Activated naive CD4-positive, alpha-beta T cell treated with anti-CD3 and anti-CD28 coated beads, Interleukin-2, amount 10 ng/mL, durations not matched to agents 7 days and 5 days (primary cell): ENCODE measurements at regions of chr2 and their contacts with region 1.

Region 1: GRCh38 chr2:112941753-112942658 is 31.0 kb downstream of the IL37 start:
- DNase-seq: peak; percentile 84
- H3K4me3 Mint-ChIP-seq: no peak overlapping the region
- H3K27ac Mint-ChIP-seq: no peak overlapping the region
- H3K4me1 Mint-ChIP-seq: no peaks in the 10 kb centered on the region
- H3K27me3 Mint-ChIP-seq: peaks cover 23% of the 10 kb centered on the region

Region 2: DNA sequence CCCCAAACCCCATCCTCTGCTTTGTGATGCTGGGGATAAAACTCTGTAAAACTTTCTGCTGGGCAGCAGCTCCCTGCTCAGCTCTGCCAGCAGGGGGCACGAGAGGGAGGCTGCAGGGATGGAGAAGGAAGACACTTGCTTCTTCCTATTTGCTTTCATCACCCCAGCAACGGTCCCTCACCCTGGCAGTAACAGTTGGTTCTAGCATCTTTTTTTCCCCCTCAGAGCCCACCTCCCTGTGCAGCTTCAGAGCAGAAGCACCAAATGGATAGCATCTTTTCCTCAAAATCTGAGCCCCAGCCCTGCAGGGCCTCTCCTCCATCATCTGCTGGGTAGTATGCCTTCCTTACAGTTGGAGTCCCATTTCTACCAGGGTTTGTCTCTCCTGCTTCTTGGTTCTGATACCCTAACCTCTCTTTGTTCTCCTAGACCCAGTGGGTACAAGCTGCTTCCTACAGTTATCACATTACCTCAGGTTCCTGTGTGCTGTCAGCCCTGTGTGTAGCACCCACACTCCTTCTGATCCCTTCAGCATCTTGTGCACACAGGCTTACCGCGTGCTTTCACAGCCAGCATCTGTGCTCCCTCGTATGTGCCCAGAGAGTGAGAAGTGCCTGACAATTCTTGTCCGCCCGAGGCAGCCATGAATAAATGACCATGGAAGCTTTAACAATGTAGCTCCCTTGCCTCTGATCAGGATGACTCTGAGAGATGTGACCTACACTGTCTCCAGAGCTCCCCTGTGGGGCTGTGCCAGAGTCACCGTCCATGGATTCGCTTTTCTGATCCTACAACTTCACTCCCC is 192.0 kb before region 1 on chr2:
- CTCF ChIA-PET with region 1: interaction called, 151 read pairs
- DNase-seq: peak; percentile 90
- H3K4me3 Mint-ChIP-seq: no peak overlapping the region
- H3K27ac Mint-ChIP-seq: peak overlapping the region; percentile 43
- H3K4me1 Mint-ChIP-seq: peaks cover 52% of the 10 kb centered on the region
- H3K27me3 Mint-ChIP-seq: no peaks in the 10 kb centered on the region

Region 3: DNA sequence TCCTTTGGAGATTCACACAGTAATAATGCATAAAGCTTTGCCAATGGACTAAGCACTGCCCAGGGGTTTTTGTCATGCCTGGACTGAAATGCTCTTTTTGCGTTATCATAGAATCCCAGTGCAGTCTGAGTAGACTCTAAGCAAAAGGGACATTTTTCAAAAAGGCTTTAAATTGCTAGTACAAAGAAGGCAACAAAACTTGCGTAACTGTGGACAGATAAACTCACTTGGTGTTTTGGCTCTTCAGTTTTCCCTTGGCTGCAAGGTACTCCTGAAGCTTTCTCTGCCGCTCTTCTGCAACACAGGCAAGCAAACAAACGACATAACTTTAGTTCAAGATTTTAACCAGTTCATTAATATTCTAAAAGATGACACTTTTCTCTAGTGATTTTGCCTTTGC is 179.7 kb before region 1 on chr2:
- CTCF ChIA-PET with region 1: interaction called, 18 read pairs
- DNase-seq: no peak
- H3K4me3 Mint-ChIP-seq: peak overlapping the region; percentile 98
- H3K27ac Mint-ChIP-seq: no peak overlapping the region
- H3K4me1 Mint-ChIP-seq: peaks cover 50% of the 10 kb centered on the region
- H3K27me3 Mint-ChIP-seq: no peaks in the 10 kb centered on the region

Region 4: DNA sequence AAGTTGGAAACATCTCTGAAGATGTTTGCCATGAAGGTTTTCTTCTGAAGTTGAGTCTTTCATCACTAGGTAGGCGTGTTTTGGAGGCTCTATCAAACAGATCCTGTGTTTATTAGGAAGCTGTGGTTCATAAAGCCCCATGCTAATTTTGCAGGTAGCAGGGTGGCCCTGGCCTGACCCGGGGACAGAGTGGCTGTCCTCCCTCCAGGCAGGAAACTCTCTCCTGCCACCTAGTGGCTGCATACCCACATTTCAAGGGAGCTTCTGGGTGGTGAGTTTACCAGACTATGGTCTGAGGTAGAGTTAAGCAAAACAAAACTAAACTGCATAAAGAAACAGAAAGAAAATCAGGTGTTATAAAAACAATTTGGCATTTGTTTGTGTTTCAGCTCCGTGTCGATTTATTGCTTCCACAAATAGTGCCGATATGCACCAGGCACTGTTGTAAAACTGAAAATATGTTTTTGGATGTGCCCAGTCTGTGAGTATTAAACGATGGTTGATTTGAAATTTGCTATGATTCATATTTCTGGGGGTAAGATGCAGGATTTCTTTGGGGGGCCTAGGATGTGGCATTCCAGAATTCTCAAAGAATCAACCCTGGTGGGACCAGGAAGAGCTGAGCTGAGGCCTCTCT is 57.0 kb before region 1 on chr2:
- CTCF ChIA-PET with region 1: interaction called, 34 read pairs
- DNase-seq: peak; percentile 78
- H3K4me3 Mint-ChIP-seq: no peak overlapping the region
- H3K27ac Mint-ChIP-seq: peak overlapping the region; percentile 43
- H3K4me1 Mint-ChIP-seq: peaks cover 27% of the 10 kb centered on the region
- H3K27me3 Mint-ChIP-seq: peaks cover 10% of the 10 kb centered on the region

Region 5: GRCh38 chr2:112920923-112921532 is 21.0 kb before region 1 on chr2:
- CTCF ChIA-PET with region 1: interaction called, 50 read pairs
- DNase-seq: no peak
- H3K4me3 Mint-ChIP-seq: no peak overlapping the region
- H3K27ac Mint-ChIP-seq: no peak overlapping the region
- H3K4me1 Mint-ChIP-seq: no peaks in the 10 kb centered on the region
- H3K27me3 Mint-ChIP-seq: peaks cover 14% of the 10 kb centered on the region

Region 6: DNA sequence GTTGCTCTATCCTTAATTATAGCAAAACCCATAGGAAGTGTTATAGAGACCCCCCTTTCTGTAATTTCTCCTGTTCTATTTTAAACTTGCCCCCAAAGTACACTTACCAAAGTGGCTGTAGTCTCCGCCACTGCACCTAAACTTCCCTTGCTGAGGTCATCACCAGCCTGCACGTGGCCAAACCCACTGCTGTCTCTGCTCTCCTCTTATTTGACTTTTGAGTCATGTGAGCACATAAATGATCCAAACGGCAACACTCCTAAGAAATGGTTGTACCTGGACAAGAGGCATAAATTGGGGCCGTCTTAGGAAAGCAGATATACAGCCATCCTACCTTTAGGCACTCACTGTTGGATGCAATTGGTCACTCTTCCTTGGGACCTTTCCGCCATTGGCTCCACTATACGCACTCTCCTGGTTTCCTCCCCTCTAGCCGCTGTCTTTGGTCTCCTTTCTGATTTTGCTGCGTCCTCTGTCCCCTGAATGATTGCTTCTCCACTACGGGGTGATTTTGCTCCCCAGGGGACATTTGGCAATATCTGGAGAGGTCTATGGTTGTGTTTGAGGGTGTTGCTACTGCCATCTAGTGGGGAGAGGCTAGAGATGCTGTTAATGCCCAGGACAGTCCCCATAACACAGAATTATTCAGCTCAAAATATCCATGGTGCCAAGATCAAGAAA is 16.6 kb after region 1 on chr2:
- CTCF ChIA-PET with region 1: interaction called, 24 read pairs
- DNase-seq: peak; percentile 58
- H3K4me3 Mint-ChIP-seq: no peak overlapping the region
- H3K27ac Mint-ChIP-seq: no peak overlapping the region
- H3K4me1 Mint-ChIP-seq: no peaks in the 10 kb centered on the region
- H3K27me3 Mint-ChIP-seq: no peaks in the 10 kb centered on the region

Region 7: GRCh38 chr2:113734185-113734584 is 792.2 kb after region 1 on chr2:
- CTCF ChIA-PET with region 1: no interaction called
- DNase-seq: no peak
- H3K4me3 Mint-ChIP-seq: no peak overlapping the region
- H3K27ac Mint-ChIP-seq: no peak overlapping the region
- H3K4me1 Mint-ChIP-seq: no peaks in the 10 kb centered on the region
- H3K27me3 Mint-ChIP-seq: no peaks in the 10 kb centered on the region